GM18951 (cell line): ENCODE measurements at regions of chr2 and their contacts with region 1.

Region 1: GRCh38 chr2:229273723-229274338 is 2.7 kb upstream of the PID1 start:
- POLR2A ChIP-seq: no peak

Region 2: DNA sequence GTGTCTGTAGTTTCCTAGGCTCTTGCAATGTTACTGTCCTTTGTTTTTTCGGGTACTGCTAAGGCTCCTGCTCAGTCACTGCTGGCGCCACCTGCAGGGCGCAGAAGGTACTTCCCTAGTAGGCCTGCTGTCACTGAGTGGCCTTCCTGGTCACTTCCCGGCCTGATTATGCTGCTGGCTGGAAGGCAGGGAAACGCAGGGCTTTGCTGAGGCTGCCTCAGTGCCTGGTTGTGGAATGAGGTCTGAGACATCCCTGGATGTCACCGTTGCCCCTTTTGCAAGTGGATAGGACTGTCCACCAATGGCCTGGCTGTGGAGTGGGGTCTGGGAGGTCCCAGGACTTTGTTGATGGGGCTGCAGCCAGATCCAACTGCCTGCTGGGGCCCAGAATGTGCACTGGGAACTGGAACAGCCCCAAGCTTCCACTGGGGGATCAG is 1389.3 kb before region 1 on chr2:
- in situ Hi-C with region 1: loop called (anchors 25 kb)
- POLR2A ChIP-seq: no peak